ENCODE measurements at regions of chr11 and their contacts with region 1.

Region 1: GRCh38 chr11:41612415-41612814 is 153.0 kb upstream of the LRRC4C start:
- DNase-seq: peak; percentile 9
- H3K4me3 Mint-ChIP-seq: no peak overlapping the region
- H3K27ac Mint-ChIP-seq: no peak overlapping the region
- H3K4me1 Mint-ChIP-seq: peaks cover 11% of the 10 kb centered on the region
- H3K27me3 Mint-ChIP-seq: no peaks in the 10 kb centered on the region
- CTCF ChIP-seq: peak; percentile 34

Region 2: GRCh38 chr11:41461057-41461681 is 151.2 kb before region 1 on chr11:
- CTCF ChIA-PET with region 1: interaction called, 10 read pairs
- POLR2A ChIA-PET with region 1: no interaction called
- intact Hi-C with region 1: no loop called
- DNase-seq: peak; percentile 33
- H3K4me3 Mint-ChIP-seq: no peak overlapping the region
- H3K27ac Mint-ChIP-seq: no peak overlapping the region
- H3K4me1 Mint-ChIP-seq: peaks cover 11% of the 10 kb centered on the region
- H3K27me3 Mint-ChIP-seq: peaks cover 14% of the 10 kb centered on the region
- CTCF ChIP-seq: peak; percentile 67

Region 3: DNA sequence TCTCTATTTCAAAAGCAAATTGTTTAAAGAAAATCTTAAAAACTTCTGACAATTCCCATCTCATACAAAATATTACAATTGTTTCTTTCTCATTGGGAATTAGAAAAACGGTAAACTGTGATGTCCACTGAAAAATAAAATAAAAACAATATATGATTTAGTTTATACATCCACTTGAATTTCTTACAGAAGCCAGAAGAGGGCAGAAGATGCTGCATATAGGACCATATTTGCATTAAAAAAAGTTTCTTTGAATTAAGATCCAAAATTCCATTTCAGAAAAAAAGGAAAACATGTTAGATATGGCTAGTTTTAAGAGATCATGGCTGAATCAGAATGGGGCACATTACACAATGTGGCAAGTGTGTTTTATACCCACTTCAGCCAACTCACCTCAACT is 113.7 kb before region 1 on chr11:
- CTCF ChIA-PET with region 1: interaction called, 16 read pairs
- POLR2A ChIA-PET with region 1: no interaction called
- intact Hi-C with region 1: loop called (anchors 1 kb)
- DNase-seq: peak; percentile 5
- H3K4me3 Mint-ChIP-seq: no peak overlapping the region
- H3K27ac Mint-ChIP-seq: no peak overlapping the region
- H3K4me1 Mint-ChIP-seq: no peaks in the 10 kb centered on the region
- H3K27me3 Mint-ChIP-seq: no peaks in the 10 kb centered on the region
- CTCF ChIP-seq: peak; percentile 55

Measured in MCF 10A (cell line).